ENCODE measurements at regions of chr12 and their contacts with region 1.

Region 1: DNA sequence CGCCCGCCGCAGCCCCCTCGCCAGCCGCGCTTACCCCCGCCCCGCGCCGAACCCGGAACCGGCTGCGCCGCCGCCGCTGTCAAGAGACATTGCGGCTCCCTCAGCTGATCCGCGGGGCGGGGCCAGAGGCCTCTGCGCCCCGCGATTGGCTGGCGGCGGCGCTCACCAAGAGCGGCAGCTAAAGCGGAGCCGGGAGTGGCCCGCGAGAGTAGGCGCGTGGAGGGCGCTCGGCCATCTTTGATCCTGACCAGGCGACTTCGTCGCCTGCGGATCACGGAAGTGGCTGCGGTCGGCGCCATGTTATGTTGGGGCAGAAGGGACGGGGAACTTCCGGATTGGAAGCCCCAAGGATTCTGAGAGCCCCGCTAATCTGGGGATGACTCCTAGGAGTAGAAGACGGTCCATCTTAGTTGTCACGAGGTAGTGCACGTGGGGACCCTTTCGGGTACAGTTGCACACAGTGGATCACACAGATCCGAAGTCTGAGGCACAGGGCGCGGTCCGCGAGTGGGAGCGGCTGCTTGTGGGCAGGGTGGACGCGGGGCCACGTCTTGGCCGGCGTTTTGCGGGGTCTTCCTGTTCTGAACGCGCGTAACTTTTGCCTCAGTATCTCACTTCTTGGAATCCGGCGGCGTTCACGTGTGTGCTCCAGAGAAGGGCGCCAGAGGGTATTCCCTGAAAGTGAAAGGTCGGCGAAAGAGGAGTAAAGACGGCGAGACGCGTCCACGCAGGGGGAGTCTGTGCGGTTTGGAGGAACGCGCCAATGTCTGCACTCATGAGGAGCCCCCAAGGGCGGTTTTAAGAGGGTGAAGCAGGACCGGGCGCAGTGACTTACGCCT is at the start of gene CHFR:
- DNase-seq: peak; percentile 93 to 97 (median 96)
- H3K4me3 ChIP-seq: peak within 1 kb of the TSS; percentile 80 to 95
- H3K4me3 Mint-ChIP-seq: peak within 1 kb of the TSS; percentile 95 to 99 (median 98)
- H3K27ac ChIP-seq: peak within 1 kb of the TSS; percentile 97
- H3K27ac Mint-ChIP-seq: peak within 1 kb of the TSS; percentile 99 to 100 (median 100)
- H3K4me1 ChIP-seq: peaks cover 24% of the 10 kb centered on the region
- H3K4me1 Mint-ChIP-seq: peaks cover 12 to 37% (median 25%) of the 10 kb centered on the region in 4 donors
- H3K27me3 ChIP-seq: no peaks in the 10 kb centered on the region
- H3K27me3 Mint-ChIP-seq: no peaks in the 10 kb centered on the region
- total RNA-seq, gene CHFR: 67.6 to 79.4 TPM

Region 2: DNA sequence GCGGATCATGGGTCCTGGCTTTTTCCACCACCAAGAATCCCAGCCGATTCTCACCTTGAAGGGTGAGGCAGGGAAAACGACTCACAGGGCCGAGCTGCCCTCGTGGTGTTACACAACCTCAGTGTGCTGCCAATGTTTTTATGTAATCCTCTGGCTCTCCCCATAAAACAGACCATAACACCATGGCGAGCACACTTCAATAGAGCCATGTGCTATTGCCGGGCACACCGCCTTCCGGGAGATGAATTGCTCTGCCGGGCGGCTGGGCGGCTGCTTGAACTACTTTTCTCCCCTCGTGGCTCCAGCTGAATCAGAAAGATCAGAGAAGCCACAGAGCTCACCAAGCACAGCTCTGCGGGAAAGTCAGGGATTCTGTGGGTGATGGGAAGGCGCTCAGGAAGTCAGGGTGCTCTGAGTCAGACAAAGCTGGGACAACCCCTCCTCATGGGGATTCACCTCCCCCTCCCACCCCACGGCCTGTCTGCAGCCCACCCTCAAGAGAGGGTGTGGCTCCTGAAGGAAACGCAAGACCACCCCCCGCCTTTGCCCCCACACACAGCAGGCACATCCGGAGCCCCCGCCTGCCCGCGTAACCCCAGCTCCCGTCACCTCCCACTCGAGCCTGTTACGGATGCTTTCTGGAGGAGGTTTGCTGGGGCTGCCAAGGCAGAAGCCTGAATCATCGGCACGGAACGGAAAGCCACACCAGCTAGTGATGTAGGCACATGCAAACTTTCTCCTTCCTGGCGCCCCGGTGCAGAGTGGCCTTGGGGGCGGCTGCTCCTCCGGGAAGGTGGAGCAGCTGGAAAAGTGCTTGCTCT is 560.2 kb before region 1 on chr12:
- CTCF ChIA-PET with region 1: no interaction called
- POLR2A ChIA-PET with region 1: no interaction called
- intact Hi-C with region 1: no loop called
- DNase-seq: no peak
- H3K4me3 ChIP-seq: no peak overlapping the region
- H3K4me3 Mint-ChIP-seq: peak overlapping the region in 2 of 8 donors; percentile 10 to 48
- H3K27ac ChIP-seq: no peak overlapping the region
- H3K27ac Mint-ChIP-seq: no peak overlapping the region
- H3K4me1 ChIP-seq: no peaks in the 10 kb centered on the region
- H3K4me1 Mint-ChIP-seq: peaks cover 6 to 25% (median 12%) of the 10 kb centered on the region in 4 donors
- H3K27me3 ChIP-seq: peaks cover 6% of the 10 kb centered on the region
- H3K27me3 Mint-ChIP-seq: peaks cover 34 to 36% of the 10 kb centered on the region in 2 donors

Region 3: GRCh38 chr12:132710422-132711168 is 177.1 kb before region 1 on chr12 and contains the start of gene PGAM5:
- CTCF ChIA-PET with region 1: no interaction called
- POLR2A ChIA-PET with region 1: interaction called, 4 read pairs
- intact Hi-C with region 1: loop called (anchors 5 kb)
- DNase-seq: peak; percentile 95 to 97 (median 96)
- H3K4me3 ChIP-seq: peak within 1 kb of the TSS; percentile 48 to 70
- H3K4me3 Mint-ChIP-seq: peak within 1 kb of the TSS; percentile 88 to 90 (median 90)
- H3K27ac ChIP-seq: peak within 1 kb of the TSS; percentile 91
- H3K27ac Mint-ChIP-seq: peak within 1 kb of the TSS; percentile 92 to 95 (median 94)
- H3K4me1 ChIP-seq: peaks cover 28% of the 10 kb centered on the region
- H3K4me1 Mint-ChIP-seq: peaks cover 8 to 33% (median 19%) of the 10 kb centered on the region in 4 donors
- H3K27me3 ChIP-seq: no peaks in the 10 kb centered on the region
- H3K27me3 Mint-ChIP-seq: no peaks in the 10 kb centered on the region
- total RNA-seq, gene PGAM5: 23.8 to 28.1 TPM

Region 4: DNA sequence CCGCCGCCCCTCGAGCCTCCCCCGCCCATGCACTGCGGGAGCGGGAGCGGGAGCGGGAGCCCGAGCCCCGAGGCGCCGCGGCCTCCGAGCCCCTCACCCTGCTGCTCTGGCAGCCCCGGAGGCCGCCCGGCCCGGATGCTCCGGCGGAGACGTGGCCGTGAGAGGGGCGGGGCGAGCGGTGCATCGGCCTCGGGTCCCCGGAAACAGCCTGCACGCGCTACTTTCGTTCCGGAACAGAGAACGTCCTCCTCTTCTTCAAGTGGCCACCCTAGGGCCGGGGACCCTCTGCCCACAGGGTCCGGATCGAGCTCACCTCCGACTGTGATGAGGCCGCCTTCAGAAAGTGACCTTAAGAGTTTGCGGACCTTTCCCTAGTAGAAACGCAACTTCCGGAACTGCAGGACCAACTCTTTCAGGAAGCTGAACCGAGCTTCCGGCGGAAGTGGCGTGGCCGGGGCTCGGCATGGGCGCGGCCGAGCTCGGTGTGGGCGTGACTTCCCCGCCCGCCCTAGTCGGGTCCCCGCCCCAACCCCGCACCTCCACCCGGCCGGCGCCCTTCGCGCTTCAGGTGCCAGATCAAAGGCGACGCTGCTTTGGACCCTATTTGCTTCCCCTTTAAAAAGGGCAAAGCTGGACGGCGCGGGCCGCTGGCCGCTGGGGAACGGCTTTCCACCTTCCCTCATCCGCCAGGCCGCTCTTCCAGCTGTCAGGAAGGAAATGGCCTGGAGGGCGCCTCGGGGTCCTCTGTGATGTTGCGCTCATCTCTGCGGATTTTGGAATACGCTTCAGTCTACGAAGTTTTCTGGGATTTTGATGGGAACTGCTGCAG is 58.8 kb before region 1 on chr12 and contains the start of gene GOLGA3:
- CTCF ChIA-PET with region 1: no interaction called
- POLR2A ChIA-PET with region 1: interaction called, 14 read pairs
- intact Hi-C with region 1: loop called (anchors 1 kb)
- DNase-seq: peak; percentile 93 to 96 (median 95)
- H3K4me3 ChIP-seq: peak within 1 kb of the TSS; percentile 58 to 91
- H3K4me3 Mint-ChIP-seq: peak within 1 kb of the TSS; percentile 91 to 99 (median 96)
- H3K27ac ChIP-seq: peak within 1 kb of the TSS; percentile 98
- H3K27ac Mint-ChIP-seq: peak within 1 kb of the TSS; percentile 99 to 100 (median 100)
- H3K4me1 ChIP-seq: peaks cover 30% of the 10 kb centered on the region
- H3K4me1 Mint-ChIP-seq: peaks cover 22 to 63% (median 43%) of the 10 kb centered on the region in 4 donors
- H3K27me3 ChIP-seq: no peaks in the 10 kb centered on the region
- H3K27me3 Mint-ChIP-seq: no peaks in the 10 kb centered on the region
- total RNA-seq, gene GOLGA3: 64.1 to 67.6 TPM

Region 5: GRCh38 chr12:132986001-132986912 is 98.5 kb after region 1 on chr12 and contains the start of gene ZNF26:
- CTCF ChIA-PET with region 1: no interaction called
- POLR2A ChIA-PET with region 1: interaction called, 3 read pairs
- intact Hi-C with region 1: loop called (anchors 1 kb)
- DNase-seq: peak; percentile 85 to 90 (median 86)
- H3K4me3 ChIP-seq: peak within 1 kb of the TSS; percentile 58 to 64
- H3K4me3 Mint-ChIP-seq: peak within 1 kb of the TSS; percentile 92 to 98 (median 95)
- H3K27ac ChIP-seq: peak within 1 kb of the TSS; percentile 77
- H3K27ac Mint-ChIP-seq: peak within 1 kb of the TSS; percentile 95 to 97 (median 97)
- H3K4me1 ChIP-seq: peaks cover 22% of the 10 kb centered on the region
- H3K4me1 Mint-ChIP-seq: peaks cover 24 to 48% (median 33%) of the 10 kb centered on the region in 4 donors
- H3K27me3 ChIP-seq: no peaks in the 10 kb centered on the region
- H3K27me3 Mint-ChIP-seq: peaks cover 0 to 3% of the 10 kb centered on the region in 2 donors
- total RNA-seq, gene ZNF26: 25.9 to 28.2 TPM

Region 6: GRCh38 chr12:133080368-133081158 is 192.8 kb after region 1 on chr12 and contains the start of gene ZNF140:
- CTCF ChIA-PET with region 1: no interaction called
- POLR2A ChIA-PET with region 1: interaction called, 5 read pairs
- intact Hi-C with region 1: loop called (anchors 1 kb)
- DNase-seq: peak; percentile 95 to 98 (median 97)
- H3K4me3 ChIP-seq: peak within 1 kb of the TSS; percentile 59 to 76
- H3K4me3 Mint-ChIP-seq: peak within 1 kb of the TSS in 1 of 8 donors; percentile 17
- H3K27ac ChIP-seq: peak within 1 kb of the TSS; percentile 100
- H3K27ac Mint-ChIP-seq: no peak within 1 kb of the TSS
- H3K4me1 ChIP-seq: peaks cover 13% of the 10 kb centered on the region
- H3K4me1 Mint-ChIP-seq: peaks cover 0 to 10% (median 5%) of the 10 kb centered on the region in 4 donors
- H3K27me3 ChIP-seq: no peaks in the 10 kb centered on the region
- H3K27me3 Mint-ChIP-seq: no peaks in the 10 kb centered on the region
- total RNA-seq, gene ZNF140: 25.2 to 28.2 TPM

Measured in CD4-positive, alpha-beta memory T cell (primary cell).